ENCODE measurements at regions of chr11 and their contacts with region 1.

Region 1: DNA sequence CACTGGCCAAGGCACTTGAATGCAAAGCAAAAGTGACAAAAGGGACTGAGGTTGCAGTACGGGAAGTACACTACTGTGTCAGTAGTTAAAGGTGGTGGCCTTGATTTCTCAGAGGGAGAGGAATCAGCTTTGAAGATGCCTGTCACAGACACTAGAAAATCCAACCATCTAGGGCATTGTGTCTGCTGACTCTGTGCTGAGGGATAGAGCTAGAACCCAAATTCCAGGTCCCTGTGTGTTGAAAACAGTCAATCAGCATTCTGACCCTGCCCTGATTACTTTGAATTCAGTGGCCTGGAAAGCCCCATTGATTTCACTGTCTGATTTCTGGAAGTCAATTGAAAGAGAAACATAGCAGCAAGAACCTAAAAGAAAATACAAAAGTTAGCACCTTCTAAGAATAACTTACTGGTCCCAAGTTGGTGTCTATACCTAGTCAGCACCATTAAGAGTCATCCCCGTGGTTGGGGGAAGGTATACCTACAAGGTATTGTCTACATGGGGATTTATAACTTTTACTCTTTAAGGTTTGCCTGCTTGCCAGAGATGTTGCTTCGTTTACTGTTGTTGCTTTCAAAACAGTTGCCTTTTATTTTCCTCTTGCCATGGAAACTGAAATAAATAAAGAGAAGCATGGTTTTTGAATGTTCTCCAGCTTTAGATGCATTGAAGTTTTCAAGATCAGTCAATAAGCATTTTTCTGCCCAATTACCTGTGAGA is 97.3 kb downstream of the PDHX start:
- DNase-seq: peak; percentile 85
- H3K4me3 Mint-ChIP-seq: peak overlapping the region; percentile 50
- H3K27ac Mint-ChIP-seq: peak overlapping the region; percentile 91
- H3K4me1 Mint-ChIP-seq: peaks cover 39% of the 10 kb centered on the region
- H3K27me3 Mint-ChIP-seq: peaks cover 16% of the 10 kb centered on the region

Region 2: DNA sequence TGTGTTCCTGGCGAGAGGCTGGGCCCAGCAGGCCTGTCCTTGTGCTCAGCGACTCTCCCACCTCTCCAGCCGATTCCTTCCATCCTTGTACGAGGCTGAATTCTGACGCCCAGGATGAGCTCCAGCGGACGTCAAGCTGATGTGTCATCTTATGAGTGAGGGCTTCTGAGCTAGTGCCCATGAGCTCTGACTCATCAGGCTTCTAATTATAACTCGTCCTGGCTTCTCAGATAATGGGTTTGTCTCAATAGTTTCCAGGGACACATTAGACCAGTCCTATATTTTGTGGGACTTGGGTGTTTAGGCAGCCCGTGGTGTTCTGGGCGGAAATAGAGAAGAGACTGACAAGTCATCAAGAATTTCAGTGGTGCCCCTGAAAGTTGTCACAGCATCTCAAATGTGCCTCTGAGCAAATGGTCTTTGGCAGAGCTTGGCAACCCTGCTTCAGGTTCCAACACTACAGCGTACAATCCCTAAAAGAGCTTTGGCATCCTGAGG is 17.1 kb after region 1 on chr11:
- intact Hi-C with region 1: loop called (anchors 1 kb)
- DNase-seq: peak; percentile 71
- H3K4me3 Mint-ChIP-seq: peak overlapping the region; percentile 72
- H3K27ac Mint-ChIP-seq: peak overlapping the region; percentile 94
- H3K4me1 Mint-ChIP-seq: peaks cover 50% of the 10 kb centered on the region
- H3K27me3 Mint-ChIP-seq: peaks cover 2% of the 10 kb centered on the region

Region 3: GRCh38 chr11:35126000-35126878 is 112.6 kb after region 1 on chr11:
- intact Hi-C with region 1: loop called (anchors 1 kb)
- DNase-seq: peak; percentile 79
- H3K4me3 Mint-ChIP-seq: peak overlapping the region; percentile 74
- H3K27ac Mint-ChIP-seq: peak overlapping the region; percentile 80
- H3K4me1 Mint-ChIP-seq: peaks cover 50% of the 10 kb centered on the region
- H3K27me3 Mint-ChIP-seq: peaks cover 3% of the 10 kb centered on the region

Region 4: DNA sequence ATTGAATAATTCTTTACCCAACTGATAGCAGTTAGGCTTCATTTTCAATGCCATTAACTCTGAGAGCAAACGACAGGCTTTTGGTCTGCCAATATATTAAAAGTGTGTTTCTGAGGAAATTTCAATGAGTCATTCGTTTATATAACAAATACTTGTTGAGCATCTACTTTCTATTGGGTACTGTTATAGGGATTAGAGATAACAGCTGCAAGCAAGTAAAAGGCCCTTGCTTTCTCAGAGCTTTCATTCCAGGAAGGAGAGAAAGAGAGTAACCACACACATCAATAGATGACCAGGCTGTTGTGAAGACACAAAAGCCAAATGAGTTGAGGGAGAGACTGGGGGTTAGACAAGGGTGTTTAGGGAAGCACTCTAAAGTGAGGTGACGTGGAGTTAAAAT is 161.0 kb after region 1 on chr11:
- intact Hi-C with region 1: loop called (anchors 1 kb)
- DNase-seq: peak; percentile 69
- H3K4me3 Mint-ChIP-seq: peak overlapping the region; percentile 57
- H3K27ac Mint-ChIP-seq: peak overlapping the region; percentile 85
- H3K4me1 Mint-ChIP-seq: peaks cover 85% of the 10 kb centered on the region
- H3K27me3 Mint-ChIP-seq: no peaks in the 10 kb centered on the region

Region 5: DNA sequence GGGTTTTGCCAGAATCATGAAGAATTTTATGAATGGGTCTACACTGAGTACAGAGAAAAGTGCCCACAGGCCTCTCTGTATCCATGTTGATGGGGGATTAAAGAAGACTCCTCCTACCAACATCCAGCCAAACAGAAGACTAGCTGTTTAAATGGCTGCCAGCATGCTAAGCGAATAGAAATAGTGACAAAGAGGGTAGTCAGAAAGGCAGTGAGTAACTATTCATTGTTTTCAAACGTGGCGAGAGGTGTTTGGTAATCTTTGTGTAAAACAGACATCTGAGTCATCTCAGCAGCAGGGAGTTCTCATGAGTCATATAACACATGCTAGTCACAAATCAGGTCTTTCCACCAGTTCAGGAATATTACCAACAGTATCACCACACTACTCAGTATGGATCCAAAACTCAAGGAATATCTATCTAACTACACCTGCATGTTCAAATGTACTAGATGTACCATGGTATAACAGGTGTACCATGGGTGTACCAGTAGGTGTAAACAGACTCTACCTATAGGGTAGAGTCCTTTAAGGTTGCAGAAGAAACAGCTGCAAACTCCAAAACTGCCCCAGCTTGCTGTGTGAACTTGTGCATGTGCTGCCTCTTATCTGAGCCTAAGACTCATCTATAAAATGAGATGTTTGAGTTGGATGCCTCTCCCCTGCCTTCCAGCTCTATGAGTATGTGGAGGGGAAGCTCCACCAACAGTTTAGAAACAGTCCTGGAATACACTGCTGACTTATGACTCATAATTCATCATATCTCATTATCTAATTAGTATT is 323.7 kb after region 1 on chr11:
- intact Hi-C with region 1: loop called (anchors 1 kb)
- DNase-seq: no peak
- H3K4me3 Mint-ChIP-seq: no peak overlapping the region
- H3K27ac Mint-ChIP-seq: peak overlapping the region; percentile 45
- H3K4me1 Mint-ChIP-seq: peaks cover 32% of the 10 kb centered on the region
- H3K27me3 Mint-ChIP-seq: peaks cover 3% of the 10 kb centered on the region

Measured in activated CD4-positive, alpha-beta T cell treated with anti-CD3 and anti-CD28 coated beads, Interleukin-2, amount 10 ng/mL, durations not matched to agents 24 days and 14 days (primary cell).